ENCODE measurements at regions of chrX and their contacts with region 1.

Region 1: GRCh38 chrX:47568656-47569295 is 7.8 kb downstream of the ARAF start:
- DNase-seq: peak in 1 of 2 experiments; percentile 59
- H3K4me3 ChIP-seq: no peak overlapping the region
- H3K27ac ChIP-seq: no peak overlapping the region
- H3K4me1 ChIP-seq: peaks cover 0 to 8% (median 3%) of the 10 kb centered on the region in 4 experiments; a peak in 5 of 7 replicates
- H3K27me3 ChIP-seq: no peaks in the 10 kb centered on the region
- CTCF ChIP-seq: peak in 2 of 3 experiments; percentile 34 to 52; a peak in 3 of 4 replicates
- EP300 ChIP-seq: no peak
- POLR2A ChIP-seq: no peak
- RAD21 ChIP-seq: peak; percentile 18 to 34; a peak in 2 of 4 replicates

Region 2: GRCh38 chrX:47543496-47543895 is 25.3 kb before region 1 on chrX:
- CTCF ChIA-PET with region 1: no interaction called
- POLR2A ChIA-PET with region 1: no interaction called
- DNase-seq: no peak
- H3K4me3 ChIP-seq: no peak overlapping the region
- H3K27ac ChIP-seq: no peak overlapping the region
- H3K4me1 ChIP-seq: no peaks in the 10 kb centered on the region
- H3K27me3 ChIP-seq: no peaks in the 10 kb centered on the region
- CTCF ChIP-seq: no peak
- EP300 ChIP-seq: no peak
- POLR2A ChIP-seq: no peak
- RAD21 ChIP-seq: no peak

Region 3: GRCh38 chrX:47619486-47620302 is 50.9 kb after region 1 on chrX and contains the start of gene SYN1:
- CTCF ChIA-PET with region 1: interaction called, 11 read pairs
- POLR2A ChIA-PET with region 1: interaction called, 11 read pairs
- DNase-seq: peak; percentile 47 to 87
- H3K4me3 ChIP-seq: peak within 1 kb of the TSS; percentile 23 to 60 (median 34)
- H3K27ac ChIP-seq: no peak within 1 kb of the TSS; the same call in 1 of the 2 replicates
- H3K4me1 ChIP-seq: peaks cover 3 to 7% (median 5%) of the 10 kb centered on the region in 4 experiments
- H3K27me3 ChIP-seq: no peaks in the 10 kb centered on the region
- CTCF ChIP-seq: no peak
- EP300 ChIP-seq: peak in 1 of 2 experiments; percentile 99; a peak in 2 of 3 replicates
- POLR2A ChIP-seq: peak in 1 of 2 experiments; percentile 48; a peak in 1 of 3 replicates
- RAD21 ChIP-seq: no peak; a peak in 1 of 4 replicates
- total RNA-seq, gene SYN1: 12.9 and 14.1 TPM in 2 replicates

Region 4: GRCh38 chrX:47628980-47629379 is 60.2 kb after region 1 on chrX:
- CTCF ChIA-PET with region 1: interaction called, 11 read pairs
- POLR2A ChIA-PET with region 1: interaction called, 4 read pairs
- DNase-seq: no peak
- H3K4me3 ChIP-seq: no peak overlapping the region
- H3K27ac ChIP-seq: no peak overlapping the region
- H3K4me1 ChIP-seq: peaks cover 0 to 3% (median 0%) of the 10 kb centered on the region in 4 experiments; a peak in 4 of 7 replicates
- H3K27me3 ChIP-seq: no peaks in the 10 kb centered on the region
- CTCF ChIP-seq: peak in 2 of 3 experiments; percentile 48 to 55; a peak in 3 of 4 replicates
- EP300 ChIP-seq: no peak
- POLR2A ChIP-seq: no peak
- RAD21 ChIP-seq: peak; percentile 55 to 71

Measured in H1 (cell line).